AG04450 (cell line): ENCODE measurements at regions of chr6 and their contacts with region 1.

Region 1: DNA sequence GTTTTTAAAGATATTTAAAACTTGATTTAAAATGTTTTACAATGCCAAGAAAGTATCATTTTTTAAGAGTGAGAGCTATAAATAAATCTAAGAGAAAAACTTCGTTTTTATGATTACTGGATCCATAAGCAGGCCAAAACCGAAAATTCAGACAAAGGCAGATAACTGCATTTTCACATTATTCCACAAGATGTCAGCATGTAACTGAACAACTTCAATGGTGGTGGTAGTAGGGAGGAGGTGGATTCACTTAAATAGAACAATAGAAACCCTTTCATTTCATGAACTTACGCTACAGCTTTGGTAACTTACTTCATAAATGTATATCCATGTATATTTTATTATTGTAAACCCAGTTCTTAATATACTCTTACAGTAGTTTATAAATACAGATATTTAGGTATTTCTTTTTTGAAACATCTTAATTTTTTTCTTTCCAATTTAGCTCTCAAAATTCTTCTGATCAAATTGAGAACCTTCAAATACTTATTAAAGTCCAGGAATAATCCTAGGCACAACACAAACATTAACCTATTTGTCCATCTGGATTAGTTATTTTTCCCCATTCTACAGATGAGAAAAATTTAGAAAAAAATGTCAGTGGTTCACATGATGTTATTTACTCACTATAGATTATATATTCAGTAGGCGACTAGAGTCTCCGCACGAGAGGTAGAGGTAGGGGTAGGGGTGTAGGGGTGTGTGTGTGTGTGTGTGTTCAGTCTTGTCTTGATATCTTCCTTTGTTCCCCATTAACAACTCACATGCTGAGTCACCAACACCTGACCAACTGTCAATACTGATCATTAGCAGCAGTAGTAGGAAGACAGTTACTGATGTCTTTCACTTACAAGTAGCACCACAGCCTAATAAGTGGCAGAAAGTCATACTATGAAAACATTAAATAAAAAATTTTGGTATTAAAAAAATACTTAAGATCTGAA is 111.5 kb downstream of the ARHGAP18 start:
- DNase-seq: peak; percentile 49
- H3K4me3 ChIP-seq: no peak overlapping the region
- H3K27ac ChIP-seq: no peak overlapping the region
- H3K27me3 ChIP-seq: no peaks in the 10 kb centered on the region
- CTCF ChIP-seq: peak; percentile 73

Region 2: GRCh38 chr6:129105035-129105434 is 493.5 kb before region 1 on chr6:
- CTCF ChIA-PET with region 1: no interaction called
- POLR2A ChIA-PET with region 1: no interaction called
- DNase-seq: no peak
- H3K4me3 ChIP-seq: no peak overlapping the region
- H3K27ac ChIP-seq: no peak overlapping the region
- H3K27me3 ChIP-seq: no peaks in the 10 kb centered on the region
- CTCF ChIP-seq: no peak

Region 3: DNA sequence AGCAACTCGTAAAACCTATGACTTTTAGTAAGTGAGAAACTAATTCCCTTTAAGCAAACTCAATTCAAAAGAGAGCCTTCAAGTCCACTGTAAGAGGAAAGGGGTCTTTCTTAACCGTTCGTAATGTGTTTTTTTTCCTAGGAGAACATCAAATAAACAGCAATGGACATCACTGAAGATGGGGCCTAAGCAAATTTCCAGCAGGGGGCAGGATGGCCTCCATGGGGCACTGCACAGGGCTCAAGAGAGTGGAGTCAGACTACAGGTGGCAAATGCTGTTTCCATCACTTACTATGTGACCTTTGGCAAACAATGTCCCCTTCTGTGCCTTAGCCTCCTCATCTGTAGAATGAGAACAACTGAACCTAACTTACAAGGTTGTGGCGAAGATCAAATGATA is 22.7 kb after region 1 on chr6:
- CTCF ChIA-PET with region 1: interaction called, 13 read pairs
- POLR2A ChIA-PET with region 1: no interaction called
- DNase-seq: no peak
- H3K4me3 ChIP-seq: no peak overlapping the region
- H3K27ac ChIP-seq: no peak overlapping the region
- H3K27me3 ChIP-seq: no peaks in the 10 kb centered on the region
- CTCF ChIP-seq: peak; percentile 21; the same call in 1 of the 2 replicates

Region 4: DNA sequence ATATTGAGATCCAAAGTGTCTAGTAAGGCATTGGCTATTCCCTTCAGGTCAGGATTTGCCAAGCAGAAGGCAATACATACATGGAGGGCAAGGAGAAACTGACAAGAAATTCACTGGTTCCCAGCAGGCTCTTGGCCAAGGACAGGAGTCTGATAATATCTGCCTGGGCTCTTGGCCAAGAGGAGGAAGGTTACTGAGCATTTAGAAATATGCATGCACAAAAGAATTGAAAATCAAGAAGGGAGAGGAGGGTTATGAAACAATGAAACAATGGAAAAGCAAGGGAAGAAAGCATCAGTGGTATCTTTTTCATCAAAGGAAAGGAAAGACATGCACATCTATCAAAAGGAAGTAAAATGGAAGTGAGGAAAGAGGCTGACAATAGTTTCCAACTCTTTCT is 69.1 kb after region 1 on chr6:
- CTCF ChIA-PET with region 1: interaction called, 29 read pairs
- POLR2A ChIA-PET with region 1: no interaction called
- DNase-seq: no peak
- H3K4me3 ChIP-seq: no peak overlapping the region
- H3K27ac ChIP-seq: no peak overlapping the region
- H3K27me3 ChIP-seq: no peaks in the 10 kb centered on the region
- CTCF ChIP-seq: no peak

Region 5: GRCh38 chr6:129748212-129748900 is 149.8 kb after region 1 on chr6:
- CTCF ChIA-PET with region 1: interaction called, 25 read pairs
- POLR2A ChIA-PET with region 1: no interaction called
- DNase-seq: no peak
- H3K4me3 ChIP-seq: no peak overlapping the region
- H3K27ac ChIP-seq: peak overlapping the region; percentile 53
- H3K27me3 ChIP-seq: no peaks in the 10 kb centered on the region
- CTCF ChIP-seq: no peak

Region 6: GRCh38 chr6:129785047-129785755 is 186.7 kb after region 1 on chr6:
- CTCF ChIA-PET with region 1: interaction called, 10 read pairs
- POLR2A ChIA-PET with region 1: no interaction called
- DNase-seq: no peak
- H3K4me3 ChIP-seq: no peak overlapping the region
- H3K27ac ChIP-seq: no peak overlapping the region
- H3K27me3 ChIP-seq: no peaks in the 10 kb centered on the region
- CTCF ChIP-seq: no peak

Region 7: GRCh38 chr6:130020907-130021629 is 422.6 kb after region 1 on chr6:
- CTCF ChIA-PET with region 1: interaction called, 51 read pairs
- POLR2A ChIA-PET with region 1: interaction called, 3 read pairs
- DNase-seq: peak; percentile 89
- H3K4me3 ChIP-seq: peak overlapping the region; percentile 74
- H3K27ac ChIP-seq: peak overlapping the region; percentile 41
- H3K27me3 ChIP-seq: no peaks in the 10 kb centered on the region
- CTCF ChIP-seq: peak; percentile 91